ENCODE measurements at regions of chr14 and their contacts with region 1.

Region 1: DNA sequence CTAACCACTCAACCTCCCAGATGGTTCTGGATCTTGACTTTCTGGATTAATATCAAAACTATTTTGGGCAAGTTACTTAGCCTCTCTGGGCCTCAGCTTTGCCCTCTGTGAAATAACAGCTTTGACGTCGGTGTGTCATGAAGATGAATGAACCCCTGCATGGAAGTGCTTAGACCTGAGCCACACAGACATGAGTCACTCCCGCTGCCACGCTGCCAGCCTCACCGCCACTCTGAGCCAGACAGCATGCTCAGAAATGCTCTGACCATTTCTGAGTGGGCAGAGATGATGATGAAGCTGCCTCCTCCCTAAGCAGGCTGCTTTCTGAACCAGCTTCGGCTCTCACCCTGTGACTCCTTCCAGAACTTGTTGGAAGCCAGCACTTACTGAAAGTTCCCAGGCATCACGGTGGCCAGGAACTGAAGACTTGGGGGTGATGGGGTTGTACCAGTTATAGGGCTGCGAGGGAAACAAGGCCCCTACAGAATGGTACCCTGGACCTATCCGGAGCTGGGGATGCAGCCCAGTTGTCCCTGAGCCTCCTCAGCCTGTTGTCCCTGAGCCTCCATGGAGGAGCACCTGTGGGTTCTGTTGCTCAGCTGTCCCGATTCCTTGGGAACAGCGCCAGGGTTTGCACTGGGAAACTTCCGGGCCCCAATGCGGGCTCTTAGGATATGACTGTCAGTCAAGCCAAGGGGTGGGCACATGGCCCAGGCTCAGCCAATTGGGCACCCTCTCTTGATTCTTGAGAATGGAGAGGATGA is 2.0 kb upstream of the CCDC197 start:
- DNase-seq: no peak

Region 2: GRCh38 chr14:93481758-93482157 is 513.3 kb before region 1 on chr14:
- in situ Hi-C with region 1: no loop called
- DNase-seq: no peak

Region 3: GRCh38 chr14:93638790-93639189 is 356.3 kb before region 1 on chr14:
- in situ Hi-C with region 1: no loop called
- DNase-seq: no peak

Region 4: DNA sequence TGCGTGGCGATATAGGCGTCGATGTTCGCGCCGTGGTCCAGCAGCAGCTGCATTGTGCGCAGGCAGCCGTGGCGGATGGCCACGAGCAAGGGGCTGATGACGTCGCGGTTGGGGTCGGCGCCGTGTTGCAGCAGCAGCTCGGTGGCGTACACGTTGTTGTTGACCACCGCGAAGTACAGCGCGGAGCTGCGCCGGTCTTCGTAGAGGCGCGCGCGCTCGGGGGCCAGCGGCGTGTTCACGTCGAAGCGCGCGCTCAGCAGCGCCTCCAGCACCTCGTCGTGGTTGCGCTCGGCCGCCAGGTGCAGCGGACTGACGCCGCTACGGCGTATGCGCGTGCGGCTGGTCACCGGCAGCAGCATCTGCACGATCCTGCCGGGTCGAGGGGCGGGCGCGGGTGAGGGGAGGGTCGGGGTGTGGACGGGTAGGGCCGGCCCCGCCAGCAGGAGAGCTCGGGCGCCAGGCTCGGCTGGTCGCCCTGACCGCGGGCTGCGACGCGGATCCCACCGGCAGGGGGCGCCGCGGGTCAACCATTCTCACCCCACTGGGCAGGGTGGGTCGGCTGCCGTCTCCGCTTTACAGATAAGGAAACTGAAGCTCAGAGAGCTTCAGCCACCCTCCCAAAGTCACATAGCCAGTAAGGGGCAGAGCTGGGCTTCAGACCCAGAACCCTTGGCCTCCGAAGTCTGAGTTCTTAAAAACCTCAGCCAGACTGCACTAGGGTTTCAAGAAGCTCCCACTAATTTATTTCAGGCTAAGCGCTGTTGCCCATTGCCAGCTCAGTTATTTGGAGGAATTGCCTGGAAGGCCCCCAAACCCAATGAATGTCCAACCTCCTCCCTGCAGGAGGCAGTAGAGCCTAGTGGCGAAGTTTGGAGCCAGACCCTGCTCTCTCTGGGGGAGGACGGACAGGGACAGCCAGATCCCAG is 55.5 kb before region 1 on chr14:
- in situ Hi-C with region 1: loop called (anchors 10 kb)
- DNase-seq: peak; percentile 85

Measured in KBM-7 (cell line).